Activated naive CD4-positive, alpha-beta T cell treated with anti-CD3 and anti-CD28 coated beads for 36 hours (primary cell): ENCODE measurements at regions of chr3 and their contacts with region 1.

Region 1: GRCh38 chr3:139389458-139390209 is at the start of gene COPB2:
- DNase-seq: peak; percentile 97
- H3K4me3 Mint-ChIP-seq: peak within 1 kb of the TSS; percentile 95
- H3K27ac Mint-ChIP-seq: peak within 1 kb of the TSS; percentile 86
- H3K4me1 Mint-ChIP-seq: peaks cover 32% of the 10 kb centered on the region
- H3K27me3 Mint-ChIP-seq: no peaks in the 10 kb centered on the region
- total RNA-seq, gene COPB2: 83.8 to 89.2 TPM

Region 2: GRCh38 chr3:139343895-139344856 is 45.5 kb before region 1 on chr3 and contains the start of gene MRPS22:
- CTCF ChIA-PET with region 1: interaction called, 3 read pairs
- intact Hi-C with region 1: loop called (anchors 1 kb)
- DNase-seq: peak; percentile 89
- H3K4me3 Mint-ChIP-seq: no peak within 1 kb of the TSS
- H3K27ac Mint-ChIP-seq: no peak within 1 kb of the TSS
- H3K4me1 Mint-ChIP-seq: peaks cover 9% of the 10 kb centered on the region
- H3K27me3 Mint-ChIP-seq: peaks cover 3% of the 10 kb centered on the region
- total RNA-seq, gene MRPS22: 66.8 to 69.1 TPM

Region 3: GRCh38 chr3:139353920-139354556 is 35.6 kb before region 1 on chr3:
- CTCF ChIA-PET with region 1: no interaction called
- intact Hi-C with region 1: loop called (anchors 1 kb)
- DNase-seq: no peak
- H3K4me3 Mint-ChIP-seq: no peak overlapping the region
- H3K27ac Mint-ChIP-seq: no peak overlapping the region
- H3K4me1 Mint-ChIP-seq: peaks cover 40% of the 10 kb centered on the region
- H3K27me3 Mint-ChIP-seq: no peaks in the 10 kb centered on the region